B cell (primary cell): ENCODE measurements at regions of chr4 and their contacts with region 1.

Region 1: GRCh38 chr4:74932816-74933561 is at the start of gene PARM1:
- DNase-seq: peak; percentile 87
- ATAC-seq: peak; percentile 84
- H3K4me3 ChIP-seq: peak within 1 kb of the TSS; percentile 12 to 88 (median 73)
- H3K4me3 Mint-ChIP-seq: peak within 1 kb of the TSS; percentile 98
- H3K27ac ChIP-seq: peak within 1 kb of the TSS; percentile 64 to 70
- H3K27ac Mint-ChIP-seq: peak within 1 kb of the TSS; percentile 95
- H3K4me1 ChIP-seq: peaks cover 27 to 42% of the 10 kb centered on the region in 2 donors
- H3K4me1 Mint-ChIP-seq: peaks cover 37% of the 10 kb centered on the region
- H3K27me3 ChIP-seq: peaks cover 0 to 24% (median 11%) of the 10 kb centered on the region in 4 experiments
- H3K27me3 Mint-ChIP-seq: peaks cover 2% of the 10 kb centered on the region
- CTCF ChIP-seq: peak; percentile 68
- total RNA-seq, gene PARM1: 6.6 and 7.8 TPM in 2 replicates

Region 2: GRCh38 chr4:74919783-74920182 is 13.2 kb before region 1 on chr4:
- CTCF ChIA-PET with region 1: interaction called, 11 read pairs
- POLR2A ChIA-PET with region 1: no interaction called
- intact Hi-C with region 1: no loop called
- DNase-seq: no peak
- ATAC-seq: no peak
- H3K4me3 ChIP-seq: peak overlapping the region in 2 of 5 experiments; percentile 7 to 50
- H3K4me3 Mint-ChIP-seq: peak overlapping the region; percentile 65
- H3K27ac ChIP-seq: peak overlapping the region in 1 of 2 donors; percentile 55
- H3K27ac Mint-ChIP-seq: no peak overlapping the region
- H3K4me1 ChIP-seq: peaks cover 8 to 14% of the 10 kb centered on the region in 2 donors
- H3K4me1 Mint-ChIP-seq: peaks cover 20% of the 10 kb centered on the region
- H3K27me3 ChIP-seq: no peaks in the 10 kb centered on the region
- H3K27me3 Mint-ChIP-seq: no peaks in the 10 kb centered on the region
- CTCF ChIP-seq: no peak

Region 3: GRCh38 chr4:75135068-75135825 is 202.3 kb after region 1 on chr4:
- CTCF ChIA-PET with region 1: no interaction called
- POLR2A ChIA-PET with region 1: no interaction called
- intact Hi-C with region 1: loop called (anchors 5 kb)
- DNase-seq: peak; percentile 64
- ATAC-seq: peak; percentile 82
- H3K4me3 ChIP-seq: peak overlapping the region in 1 of 5 experiments; percentile 41
- H3K4me3 Mint-ChIP-seq: peak overlapping the region; percentile 68
- H3K27ac ChIP-seq: peak overlapping the region; percentile 75 to 79
- H3K27ac Mint-ChIP-seq: peak overlapping the region; percentile 56
- H3K4me1 ChIP-seq: peaks cover 30 to 34% of the 10 kb centered on the region in 2 donors
- H3K4me1 Mint-ChIP-seq: peaks cover 43% of the 10 kb centered on the region
- H3K27me3 ChIP-seq: no peaks in the 10 kb centered on the region
- H3K27me3 Mint-ChIP-seq: no peaks in the 10 kb centered on the region
- CTCF ChIP-seq: no peak

Region 4: GRCh38 chr4:75469896-75470295 is 536.9 kb after region 1 on chr4:
- CTCF ChIA-PET with region 1: no interaction called
- POLR2A ChIA-PET with region 1: no interaction called
- intact Hi-C with region 1: loop called (anchors 2 kb)
- DNase-seq: no peak
- ATAC-seq: no peak
- H3K4me3 ChIP-seq: no peak overlapping the region
- H3K4me3 Mint-ChIP-seq: no peak overlapping the region
- H3K27ac ChIP-seq: no peak overlapping the region
- H3K27ac Mint-ChIP-seq: no peak overlapping the region
- H3K4me1 ChIP-seq: no peaks in the 10 kb centered on the region
- H3K4me1 Mint-ChIP-seq: no peaks in the 10 kb centered on the region
- H3K27me3 ChIP-seq: no peaks in the 10 kb centered on the region
- H3K27me3 Mint-ChIP-seq: no peaks in the 10 kb centered on the region
- CTCF ChIP-seq: no peak

Region 5: GRCh38 chr4:75514131-75514948 is 581.4 kb after region 1 on chr4 and contains the starts of genes RCHY1 and THAP6:
- CTCF ChIA-PET with region 1: interaction called, 3 read pairs
- POLR2A ChIA-PET with region 1: no interaction called
- intact Hi-C with region 1: loop called (anchors 2 kb)
- DNase-seq: peak; percentile 96
- ATAC-seq: peak; percentile 87
- H3K4me3 ChIP-seq: peak within 1 kb of the TSS; percentile 76 to 94 (median 85)
- H3K4me3 Mint-ChIP-seq: no peak within 1 kb of the TSS
- H3K27ac ChIP-seq: peak within 1 kb of the TSS; percentile 93 to 96
- H3K27ac Mint-ChIP-seq: peak within 1 kb of the TSS; percentile 97
- H3K4me1 ChIP-seq: peaks cover 29 to 32% of the 10 kb centered on the region in 2 donors
- H3K4me1 Mint-ChIP-seq: peaks cover 36% of the 10 kb centered on the region
- H3K27me3 ChIP-seq: no peaks in the 10 kb centered on the region
- H3K27me3 Mint-ChIP-seq: no peaks in the 10 kb centered on the region
- CTCF ChIP-seq: peak; percentile 7
- total RNA-seq, gene RCHY1: 33.3 and 34.5 TPM in 2 replicates
- total RNA-seq, gene THAP6: 34.5 and 38.3 TPM in 2 replicates